Activated B cell treated with CpG ODN at 0.5 μM for 24 hours (primary cell): ENCODE measurements at regions of chr19 and their contacts with region 1.

Region 1: GRCh38 chr19:3479177-3479833 is 1.0 kb downstream of the SMIM24 start:
- DNase-seq: no peak
- ATAC-seq: peak; percentile 86
- H3K4me3 Mint-ChIP-seq: peak overlapping the region; percentile 72
- H3K27ac Mint-ChIP-seq: no peak overlapping the region
- H3K4me1 Mint-ChIP-seq: peaks cover 16% of the 10 kb centered on the region
- H3K27me3 Mint-ChIP-seq: no peaks in the 10 kb centered on the region
- CTCF ChIP-seq: no peak

Region 2: DNA sequence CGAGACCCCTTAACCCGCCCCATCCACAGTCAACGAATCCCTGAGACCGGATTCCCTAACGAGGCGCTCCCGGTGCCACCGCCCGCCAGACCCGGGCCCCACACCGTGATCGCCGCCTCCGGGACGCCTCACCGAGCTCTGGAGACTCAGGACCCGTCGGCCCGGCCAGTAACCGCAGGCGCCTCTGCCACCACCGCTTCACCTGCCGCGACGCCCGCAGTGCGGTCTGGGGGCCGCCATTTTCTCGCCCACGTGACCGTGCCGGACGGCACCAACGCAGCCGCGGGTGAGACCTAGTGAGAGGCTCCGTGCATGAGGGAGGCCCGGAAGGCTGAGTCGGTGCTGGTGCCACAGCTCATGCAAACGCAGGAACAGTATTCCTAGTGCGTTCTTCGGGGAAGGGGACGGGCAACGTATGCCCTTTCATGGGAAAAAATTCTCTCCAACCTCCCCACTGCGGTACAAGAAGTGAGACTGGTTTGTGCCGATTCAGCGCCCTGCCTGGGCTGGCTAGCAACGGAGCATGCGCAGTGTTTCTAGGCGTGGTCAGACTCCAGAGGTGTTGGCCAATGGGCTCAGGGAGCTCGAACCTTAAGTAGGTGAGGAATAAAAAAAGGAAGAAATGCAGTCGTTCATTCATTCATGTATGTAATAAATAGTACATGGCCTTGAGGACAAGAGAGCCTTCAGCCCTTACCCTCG is 21.3 kb after region 1 on chr19 and contains the start of gene DOHH:
- CTCF ChIA-PET with region 1: interaction called, 3 read pairs
- POLR2A ChIA-PET with region 1: interaction called, 6 read pairs
- intact Hi-C with region 1: loop called (anchors 2 kb)
- DNase-seq: peak; percentile 91
- ATAC-seq: peak; percentile 90
- H3K4me3 Mint-ChIP-seq: peak within 1 kb of the TSS; percentile 93
- H3K27ac Mint-ChIP-seq: peak within 1 kb of the TSS; percentile 98
- H3K4me1 Mint-ChIP-seq: peaks cover 25% of the 10 kb centered on the region
- H3K27me3 Mint-ChIP-seq: no peaks in the 10 kb centered on the region
- CTCF ChIP-seq: no peak
- total RNA-seq, gene DOHH: 12.8 and 13.6 TPM in 2 replicates